ENCODE measurements at regions of chr5 and their contacts with region 1.

Region 1: GRCh38 chr5:114449860-114450421 is 88.1 kb downstream of the KCNN2 start:
- DNase-seq: peak; percentile 43 to 78
- H3K4me3 ChIP-seq: peak overlapping the region in 1 of 4 experiments; percentile 11; a peak in 1 of 8 replicates
- H3K27ac ChIP-seq: no peak overlapping the region
- H3K4me1 ChIP-seq: peaks cover 4 to 18% (median 15%) of the 10 kb centered on the region in 4 experiments; a peak in 6 of 7 replicates
- H3K27me3 ChIP-seq: no peaks in the 10 kb centered on the region
- CTCF ChIP-seq: peak; percentile 86 to 98 (median 93)
- EP300 ChIP-seq: no peak
- POLR2A ChIP-seq: no peak
- RAD21 ChIP-seq: peak; percentile 92 to 93

Region 2: GRCh38 chr5:113678924-113679575 is 770.9 kb before region 1 on chr5:
- CTCF ChIA-PET with region 1: interaction called, 61 read pairs
- POLR2A ChIA-PET with region 1: no interaction called
- DNase-seq: peak in 1 of 2 experiments; percentile 56
- H3K4me3 ChIP-seq: no peak overlapping the region
- H3K27ac ChIP-seq: no peak overlapping the region
- H3K4me1 ChIP-seq: peaks cover 2 to 6% (median 3%) of the 10 kb centered on the region in 4 experiments; a peak in 4 of 7 replicates
- H3K27me3 ChIP-seq: no peaks in the 10 kb centered on the region
- CTCF ChIP-seq: peak; percentile 46 to 79 (median 53)
- EP300 ChIP-seq: no peak
- POLR2A ChIP-seq: no peak
- RAD21 ChIP-seq: peak; percentile 96 to 97

Region 3: GRCh38 chr5:114311968-114312367 is 138.0 kb before region 1 on chr5:
- CTCF ChIA-PET with region 1: interaction called, 42 read pairs
- POLR2A ChIA-PET with region 1: interaction called, 3 read pairs
- DNase-seq: peak; percentile 23 to 55
- H3K4me3 ChIP-seq: peak overlapping the region in 1 of 4 experiments; percentile 14; a peak in 1 of 8 replicates
- H3K27ac ChIP-seq: no peak overlapping the region
- H3K4me1 ChIP-seq: peaks cover 1 to 18% (median 12%) of the 10 kb centered on the region in 4 experiments; a peak in 6 of 7 replicates
- H3K27me3 ChIP-seq: no peaks in the 10 kb centered on the region
- CTCF ChIP-seq: no peak
- EP300 ChIP-seq: no peak
- POLR2A ChIP-seq: no peak
- RAD21 ChIP-seq: no peak

Region 4: GRCh38 chr5:114369680-114370417 is 80.1 kb before region 1 on chr5:
- CTCF ChIA-PET with region 1: interaction called, 176 read pairs
- POLR2A ChIA-PET with region 1: no interaction called
- DNase-seq: no peak
- H3K4me3 ChIP-seq: no peak overlapping the region
- H3K27ac ChIP-seq: no peak overlapping the region
- H3K4me1 ChIP-seq: no peaks in the 10 kb centered on the region; a peak in 2 of 7 replicates
- H3K27me3 ChIP-seq: no peaks in the 10 kb centered on the region
- CTCF ChIP-seq: no peak
- EP300 ChIP-seq: no peak
- POLR2A ChIP-seq: no peak
- RAD21 ChIP-seq: no peak

Region 5: DNA sequence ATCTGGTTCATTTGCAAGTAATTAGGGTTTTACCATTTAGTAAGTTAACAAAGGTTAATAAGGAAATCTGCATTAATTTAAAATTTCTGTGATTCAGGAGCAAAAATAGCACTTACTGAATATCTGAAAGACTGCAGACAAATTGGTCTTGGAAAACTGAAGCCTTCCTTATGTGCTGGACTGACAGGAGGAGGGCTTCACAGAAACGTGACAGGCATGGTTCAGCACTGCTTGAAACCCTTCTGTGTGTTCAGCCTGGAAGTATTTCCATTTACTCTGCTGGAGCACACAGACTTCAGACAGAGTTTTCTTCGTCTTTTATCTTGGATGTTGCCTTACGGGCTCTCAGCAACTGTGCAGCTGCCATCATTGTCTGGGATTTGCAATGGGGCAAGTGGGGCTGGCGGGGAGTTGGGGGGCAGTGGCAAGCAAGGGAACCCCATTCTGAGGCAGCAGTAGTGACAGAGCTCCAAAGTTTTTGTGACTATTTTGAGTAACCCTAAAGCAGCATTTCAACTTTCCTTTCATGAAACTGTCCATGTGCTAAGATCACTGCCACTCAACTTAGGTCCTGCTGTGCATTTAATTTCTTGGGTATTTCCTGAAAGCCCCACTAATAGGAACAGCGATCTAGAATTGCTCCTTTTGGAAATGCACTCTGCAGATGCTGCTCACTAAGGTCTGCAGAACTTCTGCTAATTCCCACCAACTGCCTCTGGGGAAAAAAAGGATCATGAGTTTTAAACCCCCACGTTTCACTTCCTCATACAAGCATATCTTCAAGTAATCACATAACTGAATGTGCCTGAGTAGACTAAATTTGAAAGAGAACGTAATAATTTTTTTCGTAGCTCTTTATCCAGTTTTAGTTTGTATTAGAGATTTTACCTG is 31.5 kb before region 1 on chr5:
- CTCF ChIA-PET with region 1: interaction called, 10 read pairs
- POLR2A ChIA-PET with region 1: no interaction called
- DNase-seq: no peak
- H3K4me3 ChIP-seq: no peak overlapping the region
- H3K27ac ChIP-seq: no peak overlapping the region
- H3K4me1 ChIP-seq: peaks cover 0 to 4% (median 1%) of the 10 kb centered on the region in 4 experiments; a peak in 3 of 7 replicates
- H3K27me3 ChIP-seq: no peaks in the 10 kb centered on the region
- CTCF ChIP-seq: no peak
- EP300 ChIP-seq: no peak
- POLR2A ChIP-seq: no peak
- RAD21 ChIP-seq: no peak

Region 6: GRCh38 chr5:114477816-114478334 is 27.9 kb after region 1 on chr5:
- CTCF ChIA-PET with region 1: no interaction called
- POLR2A ChIA-PET with region 1: no interaction called
- DNase-seq: no peak
- H3K4me3 ChIP-seq: no peak overlapping the region
- H3K27ac ChIP-seq: no peak overlapping the region
- H3K4me1 ChIP-seq: peaks cover 0 to 3% (median 2%) of the 10 kb centered on the region in 4 experiments; a peak in 4 of 7 replicates
- H3K27me3 ChIP-seq: no peaks in the 10 kb centered on the region
- CTCF ChIP-seq: no peak
- EP300 ChIP-seq: no peak
- POLR2A ChIP-seq: no peak
- RAD21 ChIP-seq: no peak

Region 7: DNA sequence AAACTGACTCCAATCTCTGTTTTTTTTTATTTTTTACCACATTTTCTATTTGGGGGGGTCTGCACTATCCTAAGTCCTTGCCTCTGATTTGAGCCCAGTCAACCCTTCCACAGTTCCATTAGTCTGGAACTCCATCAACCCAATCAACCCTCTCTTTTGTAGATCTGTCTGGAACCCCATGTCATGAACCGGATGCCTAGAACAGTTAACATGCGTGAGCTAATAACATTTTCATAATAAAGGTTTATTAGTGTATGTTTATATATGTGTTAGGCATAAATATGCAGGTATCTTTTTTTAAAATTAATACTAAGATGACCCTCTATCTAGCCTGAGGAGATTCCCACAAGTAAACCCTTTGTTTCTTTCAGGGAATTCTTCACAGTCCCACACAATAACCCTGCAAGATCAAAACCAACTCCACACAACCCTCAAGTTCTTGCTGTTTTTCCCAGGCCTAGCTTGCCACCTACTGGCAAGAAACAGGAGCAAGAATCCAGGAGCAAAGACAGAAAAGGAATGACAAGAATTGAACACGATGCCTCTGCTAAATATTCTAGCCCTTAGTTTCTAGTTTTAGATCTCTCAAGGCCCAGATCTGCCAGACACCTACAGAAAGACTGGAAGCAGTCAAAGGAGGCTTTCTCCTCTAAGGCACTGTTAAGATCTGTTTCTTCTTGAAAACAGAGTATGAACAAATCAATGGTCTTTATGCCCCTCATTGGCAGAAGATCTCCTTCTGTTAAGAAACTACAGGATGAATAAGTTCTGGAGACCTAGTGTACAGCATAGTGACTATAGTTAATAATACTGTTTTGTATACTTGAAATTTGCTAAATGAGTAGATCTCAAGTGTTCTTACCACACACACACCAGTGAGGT is 619.4 kb after region 1 on chr5:
- CTCF ChIA-PET with region 1: interaction called, 10 read pairs
- POLR2A ChIA-PET with region 1: no interaction called
- DNase-seq: peak in 1 of 2 experiments; percentile 58
- H3K4me3 ChIP-seq: no peak overlapping the region
- H3K27ac ChIP-seq: no peak overlapping the region
- H3K4me1 ChIP-seq: peaks cover 0 to 12% (median 3%) of the 10 kb centered on the region in 4 experiments; a peak in 4 of 7 replicates
- H3K27me3 ChIP-seq: no peaks in the 10 kb centered on the region
- CTCF ChIP-seq: peak; percentile 9 to 86 (median 83)
- EP300 ChIP-seq: no peak
- POLR2A ChIP-seq: no peak
- RAD21 ChIP-seq: peak; percentile 95 to 96